PC-9 (cell line): ENCODE measurements at regions of chr18 and their contacts with region 1.

Region 1: GRCh38 chr18:14978962-14979535 is 231.1 kb downstream of the ANKRD30B start:
- DNase-seq: peak in 1 of 2 experiments; percentile 33
- H3K4me3 ChIP-seq: no peak overlapping the region
- H3K27ac ChIP-seq: no peak overlapping the region
- H3K4me1 ChIP-seq: peaks cover 31% of the 10 kb centered on the region
- H3K27me3 ChIP-seq: no peaks in the 10 kb centered on the region
- CTCF ChIP-seq: peak; percentile 56

Region 2: GRCh38 chr18:14925281-14925709 is 53.8 kb before region 1 on chr18:
- CTCF ChIA-PET with region 1: no interaction called
- POLR2A ChIA-PET with region 1: no interaction called
- intact Hi-C with region 1: loop called (anchors 10 kb)
- DNase-seq: no peak
- H3K4me3 ChIP-seq: no peak overlapping the region
- H3K27ac ChIP-seq: no peak overlapping the region
- H3K4me1 ChIP-seq: peaks cover 14% of the 10 kb centered on the region; the same call in 1 of the 2 replicates
- H3K27me3 ChIP-seq: no peaks in the 10 kb centered on the region
- CTCF ChIP-seq: no peak

Region 3: GRCh38 chr18:14936313-14936712 is 42.7 kb before region 1 on chr18:
- CTCF ChIA-PET with region 1: no interaction called
- POLR2A ChIA-PET with region 1: no interaction called
- intact Hi-C with region 1: no loop called
- DNase-seq: no peak
- H3K4me3 ChIP-seq: no peak overlapping the region
- H3K27ac ChIP-seq: no peak overlapping the region
- H3K4me1 ChIP-seq: no peaks in the 10 kb centered on the region
- H3K27me3 ChIP-seq: no peaks in the 10 kb centered on the region
- CTCF ChIP-seq: no peak